ENCODE measurements at regions of chr16 and their contacts with region 1.

Region 1: GRCh38 chr16:66406534-66407221 is 20.4 kb upstream of the BEAN1 start:
- DNase-seq: peak; percentile 91
- ATAC-seq: peak; percentile 96
- H3K4me3 Mint-ChIP-seq: peak overlapping the region; percentile 83
- H3K27ac Mint-ChIP-seq: peak overlapping the region; percentile 86; the same call in 1 of the 2 replicates
- H3K4me1 Mint-ChIP-seq: peaks cover 9% of the 10 kb centered on the region
- H3K27me3 Mint-ChIP-seq: peaks cover 13% of the 10 kb centered on the region
- CTCF ChIP-seq: peak; percentile 96

Region 2: GRCh38 chr16:66344533-66345145 is 62.0 kb before region 1 on chr16:
- CTCF ChIA-PET with region 1: interaction called, 15 read pairs
- POLR2A ChIA-PET with region 1: no interaction called
- DNase-seq: no peak
- ATAC-seq: no peak
- H3K4me3 Mint-ChIP-seq: no peak overlapping the region
- H3K27ac Mint-ChIP-seq: no peak overlapping the region
- H3K4me1 Mint-ChIP-seq: peaks cover 7% of the 10 kb centered on the region
- H3K27me3 Mint-ChIP-seq: peaks cover 11% of the 10 kb centered on the region
- CTCF ChIP-seq: peak; percentile 73

Region 3: GRCh38 chr16:66427036-66427860 is 20.6 kb after region 1 on chr16 and contains the start of gene BEAN1:
- CTCF ChIA-PET with region 1: interaction called, 12 read pairs
- POLR2A ChIA-PET with region 1: no interaction called
- DNase-seq: peak; percentile 49
- ATAC-seq: peak; percentile 57
- H3K4me3 Mint-ChIP-seq: peak within 1 kb of the TSS; percentile 59
- H3K27ac Mint-ChIP-seq: no peak within 1 kb of the TSS
- H3K4me1 Mint-ChIP-seq: peaks cover 16% of the 10 kb centered on the region
- H3K27me3 Mint-ChIP-seq: peaks cover 92% of the 10 kb centered on the region
- CTCF ChIP-seq: no peak
- total RNA-seq, gene BEAN1: 0.07 TPM in 1 of 3 replicates, not detected in the others

Region 4: DNA sequence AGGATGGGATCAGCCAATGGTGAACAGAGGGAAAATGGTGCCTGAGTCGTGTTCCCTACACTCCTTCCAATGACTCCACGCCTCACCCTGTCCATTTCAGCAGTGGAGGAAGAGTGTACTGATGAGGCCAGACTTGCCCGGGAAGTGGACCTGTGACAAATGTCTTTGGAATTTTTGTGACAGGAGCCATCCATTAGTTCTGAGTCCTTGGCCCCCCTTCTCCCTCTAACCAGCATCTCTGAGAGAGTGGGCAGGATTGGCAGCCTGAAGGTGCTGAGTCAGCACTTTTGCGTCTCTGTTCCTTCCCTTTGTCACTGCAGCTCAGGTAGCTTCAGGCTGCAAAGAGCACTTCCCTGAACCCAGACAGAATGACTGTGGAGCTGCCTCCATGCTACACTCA is 51.2 kb after region 1 on chr16:
- CTCF ChIA-PET with region 1: interaction called, 23 read pairs
- POLR2A ChIA-PET with region 1: no interaction called
- DNase-seq: no peak
- ATAC-seq: no peak
- H3K4me3 Mint-ChIP-seq: no peak overlapping the region
- H3K27ac Mint-ChIP-seq: no peak overlapping the region
- H3K4me1 Mint-ChIP-seq: peaks cover 18% of the 10 kb centered on the region
- H3K27me3 Mint-ChIP-seq: peaks cover 7% of the 10 kb centered on the region
- CTCF ChIP-seq: no peak

Region 5: DNA sequence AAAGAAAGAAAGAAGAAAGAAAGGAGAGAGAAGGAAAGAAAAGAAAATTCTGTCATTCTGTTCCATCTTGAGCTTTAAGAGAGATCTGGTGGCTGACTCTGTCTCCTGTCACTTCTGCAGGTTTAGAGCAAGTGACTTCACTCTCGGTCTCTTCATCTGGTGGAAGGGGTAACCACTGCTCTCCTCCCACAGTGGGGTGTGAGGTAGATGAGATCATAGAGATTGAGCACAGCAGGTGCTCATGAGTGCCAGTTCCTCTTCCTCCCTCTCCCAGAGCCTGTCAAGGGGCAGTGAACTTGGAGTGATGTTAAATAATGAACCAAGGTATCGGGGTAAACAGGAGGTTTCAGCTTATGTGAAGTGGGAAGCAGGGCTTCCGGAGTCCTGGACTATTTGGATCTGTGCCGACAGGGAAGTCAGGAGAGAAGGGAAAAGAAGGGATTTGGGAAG is 68.1 kb after region 1 on chr16:
- CTCF ChIA-PET with region 1: interaction called, 44 read pairs
- POLR2A ChIA-PET with region 1: interaction called, 4 read pairs
- DNase-seq: no peak
- ATAC-seq: no peak
- H3K4me3 Mint-ChIP-seq: no peak overlapping the region
- H3K27ac Mint-ChIP-seq: no peak overlapping the region
- H3K4me1 Mint-ChIP-seq: peaks cover 30% of the 10 kb centered on the region
- H3K27me3 Mint-ChIP-seq: peaks cover 8% of the 10 kb centered on the region; the same call in 1 of the 2 replicates
- CTCF ChIP-seq: no peak

Region 6: GRCh38 chr16:66515596-66516510 is 109.2 kb after region 1 on chr16:
- CTCF ChIA-PET with region 1: interaction called, 30 read pairs
- POLR2A ChIA-PET with region 1: interaction called, 3 read pairs
- DNase-seq: peak; percentile 31
- ATAC-seq: peak; percentile 46
- H3K4me3 Mint-ChIP-seq: no peak overlapping the region
- H3K27ac Mint-ChIP-seq: peak overlapping the region; percentile 76
- H3K4me1 Mint-ChIP-seq: peaks cover 44% of the 10 kb centered on the region
- H3K27me3 Mint-ChIP-seq: no peaks in the 10 kb centered on the region
- CTCF ChIP-seq: 0 out of 2 replicates have a peak, but pooled peaks have one; percentile 17